Activated naive CD4-positive, alpha-beta T cell treated with anti-CD3 and anti-CD28 coated beads for 36 hours (primary cell): ENCODE measurements at regions of chr2 and their contacts with region 1.

Region 1: GRCh38 chr2:70735071-70735470 is 32.9 kb downstream of the ADD2 start:
- DNase-seq: no peak
- H3K4me3 Mint-ChIP-seq: no peak overlapping the region
- H3K27ac Mint-ChIP-seq: no peak overlapping the region
- H3K4me1 Mint-ChIP-seq: peaks cover 11% of the 10 kb centered on the region
- H3K27me3 Mint-ChIP-seq: no peaks in the 10 kb centered on the region

Region 2: DNA sequence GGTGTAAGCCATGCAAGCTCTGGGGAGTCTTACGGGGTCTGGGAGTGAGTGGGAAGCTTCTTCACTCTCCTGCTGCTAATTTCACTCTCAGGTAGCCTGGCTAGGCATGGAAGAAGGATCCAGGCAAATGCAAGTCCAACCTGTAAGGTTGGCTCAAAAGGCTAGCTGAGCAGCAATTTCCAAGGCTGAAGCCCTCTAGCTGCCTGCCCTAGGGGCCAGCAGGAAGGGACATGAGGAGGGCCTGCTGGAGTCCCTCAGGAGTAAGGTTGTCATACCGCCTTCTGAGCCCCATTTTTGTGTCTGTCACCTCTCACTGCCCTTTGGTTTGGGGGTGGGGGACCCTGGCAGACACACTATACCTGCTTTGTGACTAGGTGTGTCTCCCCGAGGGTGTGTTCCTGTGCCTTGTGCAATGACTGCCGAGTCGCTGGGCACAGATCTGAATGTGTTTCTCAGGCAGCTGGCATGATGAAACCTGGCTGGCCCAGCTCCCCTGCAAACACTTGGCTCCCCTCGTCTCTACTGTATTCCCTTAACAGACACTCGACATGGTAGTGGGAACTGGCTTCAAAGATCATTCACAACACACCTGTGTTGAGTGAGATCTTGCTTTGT is 309.3 kb before region 1 on chr2:
- CTCF ChIA-PET with region 1: no interaction called
- intact Hi-C with region 1: no loop called
- DNase-seq: no peak
- H3K4me3 Mint-ChIP-seq: no peak overlapping the region
- H3K27ac Mint-ChIP-seq: no peak overlapping the region
- H3K4me1 Mint-ChIP-seq: no peaks in the 10 kb centered on the region
- H3K27me3 Mint-ChIP-seq: no peaks in the 10 kb centered on the region

Region 3: GRCh38 chr2:70767699-70768589 is 32.9 kb after region 1 on chr2 and contains the start of gene ADD2:
- CTCF ChIA-PET with region 1: no interaction called
- intact Hi-C with region 1: loop called (anchors 1 kb)
- DNase-seq: peak; percentile 89
- H3K4me3 Mint-ChIP-seq: peak within 1 kb of the TSS; percentile 91
- H3K27ac Mint-ChIP-seq: peak within 1 kb of the TSS; percentile 83
- H3K4me1 Mint-ChIP-seq: peaks cover 8% of the 10 kb centered on the region
- H3K27me3 Mint-ChIP-seq: peaks cover 10% of the 10 kb centered on the region
- total RNA-seq, gene ADD2: 42.9 to 46.2 TPM

Region 4: GRCh38 chr2:70907130-70908057 is 172.3 kb after region 1 on chr2:
- CTCF ChIA-PET with region 1: no interaction called
- intact Hi-C with region 1: no loop called
- DNase-seq: no peak
- H3K4me3 Mint-ChIP-seq: peak overlapping the region; percentile 43
- H3K27ac Mint-ChIP-seq: no peak overlapping the region
- H3K4me1 Mint-ChIP-seq: peaks cover 16% of the 10 kb centered on the region
- H3K27me3 Mint-ChIP-seq: peaks cover 63% of the 10 kb centered on the region